Breast epithelium (tissue), 4 donors: ENCODE measurements at regions of chr1 and their contacts with region 1.

Region 1: DNA sequence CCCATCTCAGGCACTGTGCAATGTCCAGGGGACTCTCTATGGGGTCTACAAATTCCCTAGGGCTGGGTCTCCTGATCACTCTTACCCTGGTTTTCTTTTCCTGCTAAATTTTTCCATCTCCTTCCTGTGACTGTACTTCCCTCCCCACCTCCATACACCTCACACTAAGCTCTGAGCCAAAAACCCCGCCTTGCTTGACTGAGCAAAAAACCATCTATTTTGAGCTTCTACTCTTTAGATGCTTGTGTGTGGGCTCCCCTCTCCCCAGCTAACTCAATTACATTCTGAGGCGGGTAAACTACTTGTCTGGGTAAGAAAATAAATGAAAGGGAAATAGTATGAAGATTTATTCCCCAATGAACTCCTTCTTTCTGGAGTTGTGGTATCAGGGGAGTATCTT is 187.9 kb downstream of the PTPRU start:
- DNase-seq: no peak
- H3K4me3 ChIP-seq: no peak overlapping the region
- H3K27ac ChIP-seq: no peak overlapping the region
- H3K4me1 ChIP-seq: no peaks in the 10 kb centered on the region
- H3K27me3 ChIP-seq: no peaks in the 10 kb centered on the region
- CTCF ChIP-seq: no peak
- POLR2A ChIP-seq: no peak

Region 2: GRCh38 chr1:28208818-28209441 is 1215.3 kb before region 1 on chr1:
- intact Hi-C with region 1: no loop called
- DNase-seq: peak in 1 of 2 donors; percentile 39
- H3K4me3 ChIP-seq: no peak overlapping the region
- H3K27ac ChIP-seq: no peak overlapping the region
- H3K4me1 ChIP-seq: no peaks in the 10 kb centered on the region
- H3K27me3 ChIP-seq: no peaks in the 10 kb centered on the region
- CTCF ChIP-seq: peak in 2 of 3 donors; percentile 48 to 61
- POLR2A ChIP-seq: no peak

Region 3: GRCh38 chr1:30489737-30490389 is 1065.6 kb after region 1 on chr1:
- intact Hi-C with region 1: loop called (anchors 5 kb)
- DNase-seq: no peak
- H3K4me3 ChIP-seq: no peak overlapping the region
- H3K27ac ChIP-seq: no peak overlapping the region
- H3K4me1 ChIP-seq: no peaks in the 10 kb centered on the region
- H3K27me3 ChIP-seq: no peaks in the 10 kb centered on the region
- CTCF ChIP-seq: no peak
- POLR2A ChIP-seq: no peak